ENCODE measurements at regions of chr1 and their contacts with region 1.

Region 1: DNA sequence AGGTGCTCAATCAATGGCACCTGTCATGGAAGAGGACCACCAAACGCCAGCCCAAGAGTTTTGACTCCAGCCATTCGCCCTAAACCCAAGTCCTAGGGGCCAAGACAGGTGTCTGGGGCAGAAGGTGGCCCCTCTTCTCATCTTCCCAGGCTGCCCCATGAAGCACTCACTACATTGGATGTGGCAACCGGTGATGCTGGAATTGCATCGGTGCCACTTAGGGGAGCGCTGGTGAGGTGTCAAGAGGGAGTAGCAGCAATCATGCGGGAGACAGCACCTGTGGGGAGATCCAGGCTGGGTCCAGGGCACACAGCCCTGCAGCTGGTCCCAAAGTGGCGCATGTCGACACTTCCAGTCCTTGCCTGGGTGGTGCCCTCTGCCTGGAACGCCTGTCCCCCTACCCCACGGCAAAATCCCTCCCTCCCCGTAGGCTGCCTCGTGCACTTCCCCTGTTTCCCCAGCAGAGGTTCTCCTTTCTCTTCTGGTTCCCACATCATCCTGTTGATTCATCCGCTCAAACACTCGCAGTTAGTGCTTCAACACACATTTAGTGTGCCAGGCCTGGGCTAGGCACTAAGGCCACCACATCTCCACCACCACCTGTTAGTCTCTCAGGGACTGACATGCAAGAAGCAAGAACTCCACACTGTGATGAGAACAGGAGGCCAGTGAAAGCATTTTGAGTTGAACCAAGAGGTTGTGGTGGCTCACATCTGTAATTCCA is 18.5 kb downstream of the PLA2G2D start:
- DNase-seq: no peak
- ATAC-seq: peak; percentile 97
- H3K4me3 ChIP-seq: no peak overlapping the region
- H3K27ac ChIP-seq: no peak overlapping the region
- H3K4me1 ChIP-seq: no peaks in the 10 kb centered on the region
- H3K27me3 ChIP-seq: no peaks in the 10 kb centered on the region
- CTCF ChIP-seq: peak; percentile 84 to 90 (median 86)
- EP300 ChIP-seq: no peak
- POLR2A ChIP-seq: no peak
- RAD21 ChIP-seq: peak; percentile 94

Region 2: GRCh38 chr1:19918057-19918456 is 182.7 kb before region 1 on chr1:
- CTCF ChIA-PET with region 1: interaction called, 5 read pairs
- POLR2A ChIA-PET with region 1: no interaction called
- RAD21 ChIA-PET with region 1: interaction called, 4 read pairs
- SMC1A ChIA-PET with region 1: interaction called, 10 read pairs
- in situ Hi-C with region 1: no loop called
- intact Hi-C with region 1: loop called (anchors 1 kb)
- DNase-seq: peak; percentile 33
- ATAC-seq: peak; percentile 94
- H3K4me3 ChIP-seq: no peak overlapping the region
- H3K27ac ChIP-seq: no peak overlapping the region
- H3K4me1 ChIP-seq: no peaks in the 10 kb centered on the region
- H3K27me3 ChIP-seq: no peaks in the 10 kb centered on the region
- CTCF ChIP-seq: peak; percentile 80 to 98 (median 91); a peak in 5 of 6 replicates
- EP300 ChIP-seq: no peak
- POLR2A ChIP-seq: no peak
- RAD21 ChIP-seq: peak; percentile 98

Region 3: DNA sequence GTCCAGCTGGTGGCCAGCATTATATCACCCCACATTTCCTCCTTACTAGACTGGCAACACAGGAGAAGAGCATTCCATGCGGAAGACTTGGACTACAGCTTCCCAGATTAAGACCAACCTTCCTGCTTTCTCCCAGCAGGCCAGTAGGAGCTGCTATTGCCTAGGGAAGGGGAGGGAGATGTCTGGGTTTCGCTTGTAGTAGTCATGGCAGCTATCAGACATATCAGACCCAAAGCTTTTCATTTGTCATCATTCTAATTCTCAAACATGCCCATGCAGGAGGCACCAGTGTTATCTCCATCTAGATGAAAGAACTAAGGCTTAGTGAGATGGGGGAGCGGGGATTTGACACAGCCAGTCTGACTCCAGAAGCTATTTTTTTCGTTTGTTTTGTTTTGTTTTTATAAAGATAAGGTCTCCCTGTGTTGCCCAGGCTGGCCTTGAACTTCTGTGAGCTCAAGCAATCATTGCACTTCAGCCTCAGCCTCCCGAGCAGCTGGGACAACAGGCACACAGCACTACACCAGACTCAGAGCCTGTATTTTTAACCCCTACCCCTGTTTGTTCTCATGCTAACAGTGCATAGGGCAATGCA is 125.9 kb before region 1 on chr1:
- CTCF ChIA-PET with region 1: interaction called, 5 read pairs
- POLR2A ChIA-PET with region 1: no interaction called
- RAD21 ChIA-PET with region 1: interaction called, 3 read pairs
- SMC1A ChIA-PET with region 1: interaction called, 3 read pairs
- in situ Hi-C with region 1: no loop called
- intact Hi-C with region 1: loop called (anchors 2 kb)
- DNase-seq: no peak
- ATAC-seq: no peak
- H3K4me3 ChIP-seq: no peak overlapping the region
- H3K27ac ChIP-seq: no peak overlapping the region
- H3K4me1 ChIP-seq: no peaks in the 10 kb centered on the region
- H3K27me3 ChIP-seq: no peaks in the 10 kb centered on the region; a peak in 1 of 4 replicates
- CTCF ChIP-seq: peak; percentile 71 to 77 (median 73)
- EP300 ChIP-seq: no peak
- POLR2A ChIP-seq: no peak
- RAD21 ChIP-seq: peak; percentile 92

Region 4: GRCh38 chr1:20115479-20115878 is 14.7 kb after region 1 on chr1:
- CTCF ChIA-PET with region 1: interaction called, 4 read pairs
- POLR2A ChIA-PET with region 1: no interaction called
- RAD21 ChIA-PET with region 1: no interaction called
- SMC1A ChIA-PET with region 1: interaction called, 15 read pairs
- in situ Hi-C with region 1: no loop called
- intact Hi-C with region 1: no loop called
- DNase-seq: no peak
- ATAC-seq: no peak
- H3K4me3 ChIP-seq: no peak overlapping the region
- H3K27ac ChIP-seq: no peak overlapping the region
- H3K4me1 ChIP-seq: peaks cover 9% of the 10 kb centered on the region
- H3K27me3 ChIP-seq: no peaks in the 10 kb centered on the region
- CTCF ChIP-seq: no peak
- EP300 ChIP-seq: no peak
- POLR2A ChIP-seq: no peak
- RAD21 ChIP-seq: no peak

Region 5: DNA sequence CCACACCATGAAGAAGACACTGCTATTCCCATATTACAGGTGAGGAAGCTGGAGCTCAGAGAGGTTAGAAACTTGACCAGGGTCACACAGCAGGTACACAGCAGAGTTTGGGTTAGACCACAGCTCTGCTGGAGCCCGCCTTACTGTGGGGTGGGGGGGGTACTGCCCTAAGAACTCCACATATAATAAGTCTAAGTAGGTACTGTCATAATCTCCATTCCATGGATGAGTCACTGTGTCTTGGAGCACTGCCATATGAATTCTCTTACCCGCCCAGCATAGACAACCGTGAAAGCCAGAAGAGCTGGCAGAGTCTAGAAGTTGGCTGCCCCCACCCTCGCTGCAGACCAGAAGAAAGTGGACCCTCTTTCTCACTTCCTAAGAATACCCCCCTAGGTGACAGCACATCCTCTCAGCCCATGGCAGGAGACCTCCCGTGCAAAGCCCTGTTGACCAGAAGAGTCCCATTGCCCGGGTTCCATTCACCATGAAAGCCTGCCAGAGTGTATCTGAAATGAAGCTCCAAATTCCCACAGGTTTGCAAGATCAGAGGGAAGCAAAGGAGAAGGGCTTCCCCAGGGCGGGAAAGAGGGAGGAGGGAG is 23.8 kb after region 1 on chr1:
- CTCF ChIA-PET with region 1: interaction called, 12 read pairs
- POLR2A ChIA-PET with region 1: interaction called, 3 read pairs
- RAD21 ChIA-PET with region 1: no interaction called
- SMC1A ChIA-PET with region 1: interaction called, 12 read pairs
- in situ Hi-C with region 1: no loop called
- intact Hi-C with region 1: no loop called
- DNase-seq: no peak
- ATAC-seq: peak; percentile 75
- H3K4me3 ChIP-seq: no peak overlapping the region
- H3K27ac ChIP-seq: peak overlapping the region; percentile 33
- H3K4me1 ChIP-seq: peaks cover 49% of the 10 kb centered on the region
- H3K27me3 ChIP-seq: no peaks in the 10 kb centered on the region
- CTCF ChIP-seq: no peak
- EP300 ChIP-seq: no peak
- POLR2A ChIP-seq: no peak
- RAD21 ChIP-seq: no peak

Region 6: DNA sequence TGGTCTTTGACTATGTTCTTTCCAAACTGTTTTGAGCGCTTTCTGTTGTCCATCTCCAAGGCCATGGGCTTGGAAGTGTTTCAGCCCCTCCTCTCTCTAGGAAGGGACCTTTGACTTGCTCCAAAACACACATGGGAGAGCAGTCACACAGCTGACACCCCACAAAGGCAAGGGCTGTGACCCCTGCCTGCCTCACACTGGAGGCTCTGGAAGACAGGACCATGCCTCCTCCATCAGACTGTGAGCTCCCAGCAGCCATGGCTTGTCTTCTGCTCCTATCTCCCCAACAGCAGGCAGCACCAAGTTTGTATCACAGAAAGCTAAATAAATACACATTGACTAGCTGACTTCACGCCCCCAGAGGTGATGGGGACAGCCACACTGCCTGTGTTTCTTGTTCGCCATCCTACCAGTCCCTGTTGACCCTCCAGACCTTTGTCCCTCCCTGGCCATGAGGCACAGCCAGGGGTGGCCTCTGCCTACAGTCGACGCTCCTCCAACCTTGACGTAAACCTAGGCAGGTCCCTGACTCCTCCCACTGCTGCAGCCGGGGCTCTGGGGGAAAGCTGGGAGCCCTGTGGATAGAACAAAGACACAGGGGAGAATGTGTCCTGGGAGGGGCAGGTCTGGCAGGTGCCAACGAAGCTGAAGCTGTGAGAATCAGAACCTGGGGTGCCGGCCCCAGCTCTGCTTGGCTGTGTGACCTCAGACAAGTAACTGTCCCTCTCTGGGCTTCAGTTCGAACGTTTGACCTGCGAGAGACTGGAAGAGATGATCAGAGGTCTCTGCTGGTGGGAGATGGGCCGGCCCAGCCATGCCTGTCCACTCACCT is 43.2 kb after region 1 on chr1:
- CTCF ChIA-PET with region 1: interaction called, 181 read pairs
- POLR2A ChIA-PET with region 1: no interaction called
- RAD21 ChIA-PET with region 1: interaction called, 9 read pairs
- SMC1A ChIA-PET with region 1: interaction called, 31 read pairs
- in situ Hi-C with region 1: no loop called
- intact Hi-C with region 1: no loop called
- DNase-seq: no peak
- ATAC-seq: no peak
- H3K4me3 ChIP-seq: no peak overlapping the region
- H3K27ac ChIP-seq: no peak overlapping the region
- H3K4me1 ChIP-seq: no peaks in the 10 kb centered on the region
- H3K27me3 ChIP-seq: no peaks in the 10 kb centered on the region
- CTCF ChIP-seq: no peak
- EP300 ChIP-seq: no peak
- POLR2A ChIP-seq: no peak
- RAD21 ChIP-seq: no peak